ENCODE measurements at regions of chr12 and their contacts with region 1.

Region 1: GRCh38 chr12:28963554-28963953 is 185.5 kb upstream of the FAR2 start:
- DNase-seq: peak; percentile 69
- H3K4me3 ChIP-seq: no peak overlapping the region
- H3K27ac ChIP-seq: no peak overlapping the region
- H3K4me1 ChIP-seq: peaks cover 39% of the 10 kb centered on the region
- H3K27me3 ChIP-seq: no peaks in the 10 kb centered on the region
- CTCF ChIP-seq: peak; percentile 48 to 51
- POLR2A ChIP-seq: no peak

Region 2: DNA sequence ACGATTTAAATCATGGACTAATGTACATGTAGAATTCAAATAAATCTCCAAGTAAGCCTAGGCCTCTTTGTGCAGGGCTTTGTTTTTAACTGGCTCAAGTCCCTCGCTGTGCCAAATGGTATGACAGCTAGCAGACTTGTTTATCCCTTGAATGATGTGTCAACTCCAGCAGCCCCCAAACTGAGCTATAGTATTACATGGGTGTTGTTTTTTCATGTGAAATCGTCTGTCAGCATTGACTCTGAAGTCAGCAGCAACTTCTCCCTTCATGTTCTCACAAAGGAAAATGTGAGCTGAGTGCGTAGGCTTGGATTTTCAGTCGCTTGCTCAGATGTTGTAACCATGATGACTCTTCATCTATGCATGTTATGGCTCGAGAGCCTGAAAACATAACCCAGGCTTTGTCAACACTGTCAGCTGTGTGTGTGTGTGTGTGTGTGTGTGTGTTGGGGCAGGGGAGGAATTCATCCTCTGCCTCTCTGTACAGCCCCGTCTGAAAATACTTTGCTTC is 1064.3 kb before region 1 on chr12:
- CTCF ChIA-PET with region 1: no interaction called
- POLR2A ChIA-PET with region 1: no interaction called
- dilution Hi-C with region 1: no loop called
- intact Hi-C with region 1: no loop called
- DNase-seq: no peak
- H3K4me3 ChIP-seq: no peak overlapping the region
- H3K27ac ChIP-seq: no peak overlapping the region
- H3K4me1 ChIP-seq: no peaks in the 10 kb centered on the region
- H3K27me3 ChIP-seq: no peaks in the 10 kb centered on the region
- CTCF ChIP-seq: no peak
- POLR2A ChIP-seq: no peak

Region 3: GRCh38 chr12:27969624-27970400 is 993.7 kb before region 1 on chr12:
- CTCF ChIA-PET with region 1: interaction called, 7 read pairs
- POLR2A ChIA-PET with region 1: no interaction called
- dilution Hi-C with region 1: no loop called
- intact Hi-C with region 1: loop called (anchors 2 kb)
- DNase-seq: peak; percentile 66
- H3K4me3 ChIP-seq: peak overlapping the region; percentile 49 to 88 (median 70)
- H3K27ac ChIP-seq: peak overlapping the region; percentile 2
- H3K4me1 ChIP-seq: peaks cover 52% of the 10 kb centered on the region
- H3K27me3 ChIP-seq: no peaks in the 10 kb centered on the region
- CTCF ChIP-seq: peak in 1 of 2 donors; percentile 8
- POLR2A ChIP-seq: no peak

Region 4: GRCh38 chr12:28190321-28191050 is 773.1 kb before region 1 on chr12 and contains the start of gene CCDC91:
- CTCF ChIA-PET with region 1: interaction called, 4 read pairs
- POLR2A ChIA-PET with region 1: no interaction called
- dilution Hi-C with region 1: no loop called
- intact Hi-C with region 1: loop called (anchors 2 kb)
- DNase-seq: peak; percentile 77
- H3K4me3 ChIP-seq: peak within 1 kb of the TSS; percentile 37 to 89 (median 67)
- H3K27ac ChIP-seq: peak within 1 kb of the TSS; percentile 76
- H3K4me1 ChIP-seq: peaks cover 12% of the 10 kb centered on the region
- H3K27me3 ChIP-seq: no peaks in the 10 kb centered on the region
- CTCF ChIP-seq: peak in 1 of 2 donors; percentile 5
- POLR2A ChIP-seq: peak; percentile 41
- total RNA-seq, gene CCDC91: 9.9 and 10.5 TPM in 2 replicates

Region 5: DNA sequence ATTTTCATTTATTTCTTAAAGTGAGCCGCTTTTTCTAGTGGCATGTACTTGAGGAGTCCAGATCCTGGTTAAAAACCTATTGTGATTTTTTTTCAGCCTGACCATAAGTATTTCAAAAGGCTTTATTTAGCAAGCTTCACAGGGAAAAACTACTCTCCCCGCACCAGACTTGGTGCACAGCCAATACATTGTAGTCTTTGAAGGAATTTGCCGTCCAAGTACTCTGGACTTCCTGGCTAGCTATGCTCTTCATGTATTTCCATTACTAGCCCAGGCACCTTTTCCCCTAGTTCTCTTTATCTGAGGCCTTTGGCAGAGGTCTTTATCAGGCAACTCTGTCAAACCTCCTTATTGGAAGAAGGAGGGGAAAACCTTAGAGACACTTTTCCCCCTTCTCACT is 538.6 kb before region 1 on chr12:
- CTCF ChIA-PET with region 1: no interaction called
- POLR2A ChIA-PET with region 1: no interaction called
- dilution Hi-C with region 1: no loop called
- intact Hi-C with region 1: loop called (anchors 5 kb)
- DNase-seq: peak; percentile 97
- H3K4me3 ChIP-seq: peak overlapping the region in 1 of 3 experiments; percentile 6
- H3K27ac ChIP-seq: peak overlapping the region; percentile 50
- H3K4me1 ChIP-seq: peaks cover 13% of the 10 kb centered on the region
- H3K27me3 ChIP-seq: no peaks in the 10 kb centered on the region
- CTCF ChIP-seq: no peak
- POLR2A ChIP-seq: no peak

Region 6: DNA sequence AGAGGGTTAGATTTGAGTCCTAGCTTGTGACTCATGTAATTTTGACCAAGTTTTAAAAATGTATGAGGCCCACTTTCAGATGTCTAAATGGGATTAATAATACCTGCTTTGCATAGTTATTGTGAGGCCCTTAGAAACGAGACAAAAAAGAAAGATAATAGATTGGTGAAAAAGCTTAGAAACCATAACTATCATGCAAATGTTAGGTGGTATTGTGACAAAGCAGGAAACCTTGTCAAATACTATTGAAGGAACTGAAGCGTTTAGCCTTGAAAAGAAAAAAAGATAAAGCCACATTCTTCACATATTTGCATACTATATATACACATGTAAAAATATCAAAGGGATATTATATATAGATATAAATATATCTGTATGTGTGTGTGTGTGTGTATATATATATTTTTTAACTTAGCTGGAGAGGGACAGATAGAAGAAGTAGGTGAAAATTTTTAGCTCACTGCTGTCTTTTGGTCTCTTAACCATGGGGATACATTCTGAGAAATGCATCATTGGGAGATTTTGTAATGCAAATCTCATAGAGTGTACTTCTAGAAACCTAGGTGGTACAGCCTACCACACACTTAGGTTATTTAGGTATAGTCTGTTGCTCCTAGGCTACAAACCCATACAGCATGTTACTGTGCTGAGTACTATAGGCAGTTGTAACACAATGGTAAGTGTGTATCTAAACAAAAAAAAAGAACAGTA is 503.0 kb before region 1 on chr12:
- CTCF ChIA-PET with region 1: no interaction called
- POLR2A ChIA-PET with region 1: no interaction called
- dilution Hi-C with region 1: no loop called
- intact Hi-C with region 1: no loop called
- DNase-seq: no peak
- H3K4me3 ChIP-seq: no peak overlapping the region
- H3K27ac ChIP-seq: no peak overlapping the region
- H3K4me1 ChIP-seq: no peaks in the 10 kb centered on the region
- H3K27me3 ChIP-seq: no peaks in the 10 kb centered on the region
- CTCF ChIP-seq: no peak
- POLR2A ChIP-seq: no peak

Region 7: GRCh38 chr12:28770329-28770728 is 193.2 kb before region 1 on chr12:
- CTCF ChIA-PET with region 1: no interaction called
- POLR2A ChIA-PET with region 1: no interaction called
- dilution Hi-C with region 1: no loop called
- intact Hi-C with region 1: loop called (anchors 1 kb)
- DNase-seq: peak; percentile 94
- H3K4me3 ChIP-seq: no peak overlapping the region
- H3K27ac ChIP-seq: peak overlapping the region; percentile 77
- H3K4me1 ChIP-seq: peaks cover 27% of the 10 kb centered on the region
- H3K27me3 ChIP-seq: no peaks in the 10 kb centered on the region
- CTCF ChIP-seq: no peak
- POLR2A ChIP-seq: peak; percentile 58

Region 8: GRCh38 chr12:28899951-28900350 is 63.6 kb before region 1 on chr12:
- CTCF ChIA-PET with region 1: no interaction called
- POLR2A ChIA-PET with region 1: no interaction called
- dilution Hi-C with region 1: no loop called
- intact Hi-C with region 1: no loop called
- DNase-seq: no peak
- H3K4me3 ChIP-seq: no peak overlapping the region
- H3K27ac ChIP-seq: no peak overlapping the region
- H3K4me1 ChIP-seq: peaks cover under 1% of the 10 kb centered on the region
- H3K27me3 ChIP-seq: no peaks in the 10 kb centered on the region
- CTCF ChIP-seq: no peak
- POLR2A ChIP-seq: no peak